Kidney (tissue), 22 donors: ENCODE measurements at regions of chr5 and their contacts with region 1.

Region 1: GRCh38 chr5:11268891-11269290 is 507.9 kb upstream of the DAP start:
- DNase-seq: no peak
- H3K4me3 ChIP-seq: no peak overlapping the region
- H3K27ac ChIP-seq: no peak overlapping the region
- H3K4me1 ChIP-seq: no peaks in the 10 kb centered on the region
- H3K27me3 ChIP-seq: no peaks in the 10 kb centered on the region
- CTCF ChIP-seq: no peak

Region 2: DNA sequence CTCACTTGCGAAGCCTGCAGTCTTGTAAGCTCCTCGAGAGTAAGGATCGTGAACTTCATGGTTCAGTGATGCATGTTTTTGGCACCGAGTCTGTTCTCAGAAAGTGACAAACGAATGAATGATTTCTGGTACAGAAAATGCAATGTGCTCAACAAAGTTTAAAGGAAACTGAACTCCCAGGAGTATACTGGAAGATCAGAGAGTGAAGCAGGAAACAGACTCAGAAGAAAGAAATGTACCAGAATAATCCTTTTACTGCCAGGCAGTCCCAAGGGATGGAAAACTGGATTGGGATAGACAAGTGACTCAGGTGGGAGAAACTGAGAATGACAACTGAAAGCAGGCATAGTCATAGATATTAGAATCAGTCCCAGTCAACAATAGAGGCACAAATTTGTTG is 214.7 kb after region 1 on chr5:
- intact Hi-C with region 1: loop called (anchors 10 kb)
- DNase-seq: no peak
- H3K4me3 ChIP-seq: no peak overlapping the region
- H3K27ac ChIP-seq: no peak overlapping the region
- H3K4me1 ChIP-seq: no peaks in the 10 kb centered on the region
- H3K27me3 ChIP-seq: no peaks in the 10 kb centered on the region
- CTCF ChIP-seq: no peak